Caco-2 (cell line): ENCODE measurements at regions of chr3 and their contacts with region 1.

Region 1: DNA sequence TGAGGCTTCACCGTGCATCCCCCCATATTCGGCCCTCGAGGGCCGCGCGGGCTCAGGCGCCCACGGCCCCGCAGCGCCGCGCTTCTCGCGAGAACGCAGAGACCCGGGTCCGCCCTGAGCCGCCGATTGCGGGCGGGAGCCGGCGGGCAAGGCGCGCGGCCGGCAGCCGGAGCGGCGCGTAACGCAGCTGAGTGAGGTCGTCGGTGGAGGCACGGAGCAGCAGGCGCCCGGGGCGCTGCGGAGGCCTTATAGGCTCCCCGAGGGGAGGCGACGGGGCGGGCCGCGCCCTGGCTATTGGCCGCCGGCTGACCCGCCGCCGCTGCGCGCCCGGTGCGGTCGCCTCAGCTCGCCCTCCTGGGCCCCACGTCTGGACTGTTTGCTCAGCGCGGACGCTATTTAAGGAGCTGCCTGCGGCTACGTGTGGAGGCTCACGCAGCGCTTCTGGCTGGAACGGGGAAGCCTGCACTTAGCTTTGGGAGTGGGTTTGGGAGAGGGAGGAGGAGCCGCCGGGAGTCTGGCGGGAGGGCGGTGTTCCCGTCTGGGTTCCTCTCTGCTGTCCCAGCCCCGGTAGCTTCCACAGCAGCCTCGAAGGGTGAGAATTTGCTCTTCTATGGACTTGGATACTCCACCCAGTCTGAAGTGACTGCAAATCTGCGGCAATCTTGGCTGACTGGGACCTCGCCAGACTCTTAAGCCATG is at the start of gene PLOD2:
- DNase-seq: peak; percentile 90 to 91
- H3K4me3 ChIP-seq: peak within 1 kb of the TSS; percentile 92
- H3K4me3 Mint-ChIP-seq: peak within 1 kb of the TSS; percentile 80
- H3K27ac Mint-ChIP-seq: peak within 1 kb of the TSS; percentile 81
- H3K4me1 ChIP-seq: no peaks in the 10 kb centered on the region
- H3K4me1 Mint-ChIP-seq: peaks cover 29% of the 10 kb centered on the region
- H3K27me3 ChIP-seq: no peaks in the 10 kb centered on the region
- H3K27me3 Mint-ChIP-seq: no peaks in the 10 kb centered on the region
- CTCF ChIP-seq: no peak
- total RNA-seq, gene PLOD2: 49.4 and 53.1 TPM in 2 replicates

Region 2: DNA sequence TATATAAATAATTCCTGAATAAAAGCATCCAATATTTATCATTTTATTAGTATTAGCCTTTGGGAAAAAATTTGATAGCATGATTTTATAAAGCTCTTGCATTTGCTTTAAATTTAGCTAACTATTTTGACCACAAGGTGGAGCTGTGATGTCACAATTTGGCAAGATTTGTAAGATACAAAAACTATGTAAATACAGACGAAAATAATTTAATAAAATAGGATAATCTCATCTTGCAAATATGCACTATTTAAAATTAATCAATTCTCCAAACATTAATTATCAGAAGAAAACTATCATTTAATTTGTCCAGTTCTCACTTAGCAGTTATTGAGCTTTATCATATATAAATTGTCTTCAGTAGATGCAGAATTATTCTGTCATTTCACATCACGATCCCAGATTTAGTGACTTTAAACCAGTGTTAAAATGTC is 95.5 kb before region 1 on chr3:
- CTCF ChIA-PET with region 1: interaction called, 34 read pairs
- POLR2A ChIA-PET with region 1: interaction called, 4 read pairs
- intact Hi-C with region 1: loop called (anchors 1 kb)
- DNase-seq: peak in 1 of 2 experiments; percentile 53
- H3K4me3 ChIP-seq: no peak overlapping the region
- H3K4me3 Mint-ChIP-seq: no peak overlapping the region
- H3K27ac Mint-ChIP-seq: no peak overlapping the region
- H3K4me1 ChIP-seq: no peaks in the 10 kb centered on the region
- H3K4me1 Mint-ChIP-seq: no peaks in the 10 kb centered on the region
- H3K27me3 ChIP-seq: no peaks in the 10 kb centered on the region
- H3K27me3 Mint-ChIP-seq: no peaks in the 10 kb centered on the region
- CTCF ChIP-seq: peak; percentile 68 to 69

Region 3: GRCh38 chr3:146172563-146172962 is 11.4 kb after region 1 on chr3:
- CTCF ChIA-PET with region 1: no interaction called
- POLR2A ChIA-PET with region 1: no interaction called
- intact Hi-C with region 1: loop called (anchors 1 kb)
- DNase-seq: no peak
- H3K4me3 ChIP-seq: no peak overlapping the region
- H3K4me3 Mint-ChIP-seq: no peak overlapping the region
- H3K27ac Mint-ChIP-seq: no peak overlapping the region
- H3K4me1 ChIP-seq: peaks cover 11% of the 10 kb centered on the region; the same call in 1 of the 2 replicates
- H3K4me1 Mint-ChIP-seq: peaks cover 8% of the 10 kb centered on the region
- H3K27me3 ChIP-seq: no peaks in the 10 kb centered on the region
- H3K27me3 Mint-ChIP-seq: no peaks in the 10 kb centered on the region
- CTCF ChIP-seq: no peak

Region 4: GRCh38 chr3:146544002-146544928 is 383.2 kb after region 1 on chr3 and contains the start of gene PLSCR1:
- CTCF ChIA-PET with region 1: no interaction called
- POLR2A ChIA-PET with region 1: no interaction called
- intact Hi-C with region 1: loop called (anchors 5 kb)
- DNase-seq: peak; percentile 91 to 96
- H3K4me3 ChIP-seq: peak within 1 kb of the TSS; percentile 65
- H3K4me3 Mint-ChIP-seq: peak within 1 kb of the TSS; percentile 91
- H3K27ac Mint-ChIP-seq: peak within 1 kb of the TSS; percentile 97
- H3K4me1 ChIP-seq: 0 out of 2 replicates have a peak, but pooled peaks cover 8% of the 10 kb centered on the region
- H3K4me1 Mint-ChIP-seq: peaks cover 25% of the 10 kb centered on the region
- H3K27me3 ChIP-seq: no peaks in the 10 kb centered on the region
- H3K27me3 Mint-ChIP-seq: no peaks in the 10 kb centered on the region
- CTCF ChIP-seq: no peak
- total RNA-seq, gene PLSCR1: 112 and 116 TPM in 2 replicates